MCF 10A (cell line): ENCODE measurements at regions of chr4 and their contacts with region 1.

Region 1: DNA sequence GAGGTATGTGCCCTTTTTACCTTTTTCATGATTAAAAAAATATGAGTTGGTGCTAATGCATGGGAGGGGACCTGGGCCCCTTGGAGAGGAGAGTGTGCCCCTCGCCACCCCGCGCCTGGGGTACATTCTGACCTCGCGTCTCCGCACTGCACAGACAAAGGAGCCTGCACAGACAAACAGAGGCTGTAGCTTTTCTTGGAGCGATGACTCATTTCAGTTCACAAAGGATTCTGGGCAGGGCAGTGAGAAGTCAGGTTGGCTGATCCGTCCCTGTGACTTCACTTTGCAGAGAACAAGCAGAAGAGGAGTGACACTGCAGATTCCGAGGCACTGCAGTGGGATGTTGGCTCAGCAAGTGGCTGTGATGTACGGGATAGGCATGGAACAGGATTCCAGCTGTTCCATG is 82.9 kb downstream of the STOX2 start:
- DNase-seq: peak; percentile 92
- H3K4me3 Mint-ChIP-seq: no peak overlapping the region
- H3K27ac Mint-ChIP-seq: no peak overlapping the region
- H3K4me1 Mint-ChIP-seq: peaks cover 12% of the 10 kb centered on the region
- H3K27me3 Mint-ChIP-seq: no peaks in the 10 kb centered on the region
- CTCF ChIP-seq: no peak

Region 2: DNA sequence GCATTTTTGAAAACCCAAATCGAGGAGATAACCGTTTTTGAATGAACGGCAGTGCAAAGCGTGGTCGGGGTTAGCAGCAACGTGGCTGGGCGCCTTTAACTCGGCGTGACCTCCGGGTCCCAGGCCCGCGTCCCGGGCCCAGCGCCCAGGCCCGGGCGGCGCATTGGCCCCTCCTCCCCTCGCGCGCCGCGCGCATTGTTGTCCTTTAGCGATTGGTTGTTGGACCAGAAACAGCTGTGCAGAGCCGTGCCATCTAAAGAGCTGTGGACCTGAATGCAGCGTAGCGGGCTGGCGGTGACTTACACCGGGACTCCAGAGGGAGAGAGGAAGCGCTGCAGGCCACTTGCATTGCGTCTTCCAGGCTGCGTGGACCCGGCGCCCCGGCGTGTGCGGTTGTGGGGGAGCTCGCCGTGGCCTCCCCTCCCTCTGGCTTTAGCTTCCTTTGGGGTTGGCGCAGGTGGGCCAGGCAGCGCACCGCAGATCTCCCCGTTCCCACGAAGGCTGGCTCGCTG is 82.9 kb before region 1 on chr4 and contains the start of gene STOX2:
- CTCF ChIA-PET with region 1: no interaction called
- POLR2A ChIA-PET with region 1: interaction called, 10 read pairs
- intact Hi-C with region 1: no loop called
- DNase-seq: peak; percentile 4
- H3K4me3 Mint-ChIP-seq: peak within 1 kb of the TSS; percentile 73
- H3K27ac Mint-ChIP-seq: no peak within 1 kb of the TSS
- H3K4me1 Mint-ChIP-seq: no peaks in the 10 kb centered on the region
- H3K27me3 Mint-ChIP-seq: no peaks in the 10 kb centered on the region
- CTCF ChIP-seq: no peak
- total RNA-seq, gene STOX2: 1.1 TPM in 2 replicates

Region 3: DNA sequence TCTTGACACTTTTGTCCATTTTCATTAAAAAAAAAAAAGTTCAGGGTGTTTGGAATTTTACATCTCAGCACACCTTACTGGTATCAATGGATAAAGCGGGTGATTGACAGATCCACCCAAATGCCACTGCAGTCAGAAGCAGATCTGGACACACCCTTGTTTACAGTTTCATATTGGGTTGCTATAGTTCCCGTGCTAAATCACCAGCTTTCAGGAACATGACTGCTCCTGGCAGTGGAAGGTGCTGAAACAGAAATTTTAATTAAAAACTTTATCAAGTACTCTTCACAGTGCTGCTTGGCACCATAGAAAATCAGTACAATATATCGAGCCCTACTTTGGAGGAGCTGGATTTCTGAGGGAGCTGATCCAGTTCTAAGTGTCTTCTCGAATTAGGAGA is 33.4 kb after region 1 on chr4:
- CTCF ChIA-PET with region 1: interaction called, 4 read pairs
- POLR2A ChIA-PET with region 1: interaction called, 11 read pairs
- intact Hi-C with region 1: no loop called
- DNase-seq: peak; percentile 13
- H3K4me3 Mint-ChIP-seq: no peak overlapping the region
- H3K27ac Mint-ChIP-seq: no peak overlapping the region
- H3K4me1 Mint-ChIP-seq: no peaks in the 10 kb centered on the region
- H3K27me3 Mint-ChIP-seq: no peaks in the 10 kb centered on the region
- CTCF ChIP-seq: no peak

Region 4: GRCh38 chr4:184039963-184040383 is 52.0 kb after region 1 on chr4:
- CTCF ChIA-PET with region 1: no interaction called
- POLR2A ChIA-PET with region 1: no interaction called
- intact Hi-C with region 1: no loop called
- DNase-seq: no peak
- H3K4me3 Mint-ChIP-seq: no peak overlapping the region
- H3K27ac Mint-ChIP-seq: no peak overlapping the region
- H3K4me1 Mint-ChIP-seq: no peaks in the 10 kb centered on the region
- H3K27me3 Mint-ChIP-seq: peaks cover 30% of the 10 kb centered on the region
- CTCF ChIP-seq: no peak